ENCODE measurements at regions of chr2 and their contacts with region 1.

Region 1: DNA sequence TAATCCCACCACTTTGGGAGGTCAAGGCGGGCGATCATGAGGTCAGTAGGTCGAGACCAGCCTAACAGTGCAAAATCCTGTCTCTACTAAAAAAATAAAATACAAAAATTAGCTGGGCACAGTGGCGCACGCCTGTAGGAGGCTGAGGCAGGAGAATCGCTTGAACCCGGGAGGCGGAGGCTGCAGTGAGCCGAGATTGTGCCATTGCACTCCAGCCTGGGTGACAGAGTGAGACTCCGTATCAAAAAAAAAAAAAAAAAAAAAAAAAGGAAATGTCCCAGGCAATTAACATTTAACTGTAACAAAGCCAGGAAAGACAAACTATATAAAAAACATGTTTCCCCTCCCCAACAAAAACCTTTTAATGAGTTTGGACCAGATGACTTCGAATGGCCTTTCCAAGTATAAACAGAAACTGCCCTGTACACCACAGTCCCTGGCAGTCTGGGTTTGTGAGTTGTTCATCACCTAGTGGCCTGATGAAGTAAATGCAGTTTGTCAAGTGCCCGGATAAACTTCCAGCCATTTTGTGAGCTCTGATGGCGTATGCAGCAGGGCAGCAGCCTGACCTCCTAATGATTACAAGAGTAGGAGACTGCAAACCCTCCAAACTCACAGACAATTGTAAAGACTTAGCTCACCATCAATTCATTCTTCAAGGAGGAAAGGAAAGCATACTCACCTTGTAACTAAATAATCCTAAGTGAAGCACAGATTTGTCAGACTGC is 16.6 kb upstream of the PCBP1 start:
- DNase-seq: no peak
- H3K4me3 ChIP-seq: peak overlapping the region in 1 of 8 donors; percentile 46
- H3K27ac ChIP-seq: peak overlapping the region; percentile 44 to 88 (median 80)
- H3K4me1 ChIP-seq: peaks cover 0 to 58% (median 39%) of the 10 kb centered on the region in 6 donors
- H3K27me3 ChIP-seq: no peaks in the 10 kb centered on the region
- CTCF ChIP-seq: peak; percentile 68 to 95 (median 88)
- POLR2A ChIP-seq: no peak

Region 2: GRCh38 chr2:69926849-69927515 is 143.7 kb before region 1 on chr2:
- intact Hi-C with region 1: loop called (anchors 10 kb)
- DNase-seq: no peak
- H3K4me3 ChIP-seq: peak overlapping the region in 1 of 8 donors; percentile 47
- H3K27ac ChIP-seq: peak overlapping the region in 6 of 8 donors; percentile 26 to 85 (median 73)
- H3K4me1 ChIP-seq: peaks cover 0 to 81% (median 11%) of the 10 kb centered on the region in 6 donors
- H3K27me3 ChIP-seq: no peaks in the 10 kb centered on the region
- CTCF ChIP-seq: no peak
- POLR2A ChIP-seq: no peak

Region 3: DNA sequence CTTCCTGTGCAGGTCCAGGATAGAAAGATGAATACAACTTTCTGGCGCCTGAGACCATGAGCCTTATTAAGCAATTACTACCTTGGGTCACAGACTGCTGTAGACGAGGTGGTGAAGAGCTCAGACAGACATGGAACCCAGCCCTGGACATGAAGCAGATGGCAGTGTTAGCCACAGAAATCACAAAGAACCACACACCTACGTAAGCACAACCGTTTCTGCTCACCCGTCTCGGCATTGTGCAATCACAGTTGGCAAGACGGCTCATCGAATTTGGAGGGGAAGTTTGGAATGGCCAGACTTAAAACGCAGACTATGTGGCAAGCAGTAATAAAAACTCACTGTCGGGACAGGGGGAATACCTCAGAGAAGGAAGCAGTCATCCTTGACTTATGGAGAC is 85.0 kb before region 1 on chr2:
- intact Hi-C with region 1: no loop called
- DNase-seq: peak; percentile 83
- H3K4me3 ChIP-seq: peak overlapping the region in 1 of 8 donors; percentile 53
- H3K27ac ChIP-seq: peak overlapping the region in 7 of 8 donors; percentile 55 to 90 (median 76)
- H3K4me1 ChIP-seq: peaks cover 0 to 22% (median 3%) of the 10 kb centered on the region in 6 donors
- H3K27me3 ChIP-seq: no peaks in the 10 kb centered on the region
- CTCF ChIP-seq: peak in 5 of 11 experiments; percentile 23 to 72 (median 41)
- POLR2A ChIP-seq: no peak